CD8-positive, alpha-beta T cell (primary cell): ENCODE measurements at regions of chr7 and their contacts with region 1.

Region 1: DNA sequence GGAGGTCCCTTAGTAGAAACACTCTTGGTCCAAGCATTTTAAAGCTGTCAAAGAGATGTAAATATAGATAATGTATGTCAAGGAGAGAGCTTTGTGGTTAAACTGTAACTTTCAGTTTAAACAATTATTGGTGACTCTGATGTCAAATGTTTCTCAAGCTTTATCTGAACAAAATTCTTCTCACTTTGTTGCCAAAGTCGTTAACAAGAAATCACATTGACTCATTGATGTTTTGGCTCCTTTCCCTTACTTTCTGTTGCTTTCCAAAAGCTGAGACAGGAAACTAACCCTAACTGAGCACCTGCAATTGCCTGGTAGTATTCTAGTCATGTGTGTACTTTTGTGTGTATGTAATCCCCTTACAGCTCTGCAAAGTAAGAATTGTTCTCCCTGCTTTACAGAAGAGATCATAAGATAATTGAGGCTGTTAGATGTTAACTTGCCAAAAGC is 108.5 kb downstream of the CFTR start:
- DNase-seq: no peak
- ATAC-seq: no peak
- H3K4me3 ChIP-seq: no peak overlapping the region
- H3K4me3 Mint-ChIP-seq: no peak overlapping the region
- H3K27ac ChIP-seq: no peak overlapping the region
- H3K27ac Mint-ChIP-seq: no peak overlapping the region
- H3K4me1 ChIP-seq: no peaks in the 10 kb centered on the region
- H3K4me1 Mint-ChIP-seq: no peaks in the 10 kb centered on the region
- H3K27me3 ChIP-seq: no peaks in the 10 kb centered on the region
- H3K27me3 Mint-ChIP-seq: no peaks in the 10 kb centered on the region
- CTCF ChIP-seq: no peak

Region 2: GRCh38 chr7:115996911-115997615 is 1591.3 kb before region 1 on chr7:
- CTCF ChIA-PET with region 1: no interaction called
- POLR2A ChIA-PET with region 1: no interaction called
- intact Hi-C with region 1: loop called in 1 of 2 experiments (anchors 5 kb)
- DNase-seq: no peak
- ATAC-seq: no peak
- H3K4me3 ChIP-seq: no peak overlapping the region
- H3K4me3 Mint-ChIP-seq: no peak overlapping the region
- H3K27ac ChIP-seq: no peak overlapping the region
- H3K27ac Mint-ChIP-seq: no peak overlapping the region
- H3K4me1 ChIP-seq: no peaks in the 10 kb centered on the region
- H3K4me1 Mint-ChIP-seq: no peaks in the 10 kb centered on the region
- H3K27me3 ChIP-seq: no peaks in the 10 kb centered on the region
- H3K27me3 Mint-ChIP-seq: no peaks in the 10 kb centered on the region
- CTCF ChIP-seq: no peak

Region 3: GRCh38 chr7:116195451-116195850 is 1392.9 kb before region 1 on chr7:
- CTCF ChIA-PET with region 1: no interaction called
- POLR2A ChIA-PET with region 1: no interaction called
- intact Hi-C with region 1: no loop called
- DNase-seq: no peak
- ATAC-seq: no peak
- H3K4me3 ChIP-seq: no peak overlapping the region
- H3K4me3 Mint-ChIP-seq: no peak overlapping the region
- H3K27ac ChIP-seq: no peak overlapping the region
- H3K27ac Mint-ChIP-seq: no peak overlapping the region
- H3K4me1 ChIP-seq: no peaks in the 10 kb centered on the region
- H3K4me1 Mint-ChIP-seq: no peaks in the 10 kb centered on the region
- H3K27me3 ChIP-seq: no peaks in the 10 kb centered on the region
- H3K27me3 Mint-ChIP-seq: peaks cover 2% of the 10 kb centered on the region
- CTCF ChIP-seq: no peak